Colonic mucosa (tissue), 4 donors: ENCODE measurements at regions of chr9 and their contacts with region 1.

Region 1: GRCh38 chr9:129139993-129140396 is 28.8 kb downstream of the PTPA start:
- DNase-seq: peak; percentile 92
- H3K4me3 ChIP-seq: peak overlapping the region; percentile 29
- H3K27ac ChIP-seq: peak overlapping the region; percentile 98
- H3K4me1 ChIP-seq: peaks cover 25% of the 10 kb centered on the region
- H3K27me3 ChIP-seq: no peaks in the 10 kb centered on the region
- CTCF ChIP-seq: no peak

Region 2: DNA sequence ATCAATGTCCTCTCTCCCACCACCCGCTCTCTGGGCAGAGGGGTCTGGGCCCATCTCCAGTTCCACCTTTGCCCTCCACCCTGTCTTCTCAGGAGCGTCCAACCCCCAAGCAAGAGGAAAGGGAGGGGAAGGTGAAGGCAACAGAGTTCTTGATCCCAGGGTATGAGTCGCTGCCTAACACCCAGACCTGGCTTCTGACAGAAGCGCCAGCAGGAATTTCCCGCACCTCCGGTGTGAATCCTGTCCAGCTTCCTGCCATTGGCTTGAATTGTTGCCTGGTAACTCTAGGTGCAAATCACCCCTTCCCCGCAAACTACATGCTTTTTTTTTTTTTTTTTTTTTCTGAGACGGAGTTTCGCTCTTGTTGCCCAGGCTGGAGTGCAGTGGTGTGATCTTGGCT is 122.3 kb after region 1 on chr9:
- intact Hi-C with region 1: no loop called
- DNase-seq: no peak
- H3K4me3 ChIP-seq: no peak overlapping the region
- H3K27ac ChIP-seq: no peak overlapping the region
- H3K4me1 ChIP-seq: no peaks in the 10 kb centered on the region
- H3K27me3 ChIP-seq: peaks cover 6% of the 10 kb centered on the region
- CTCF ChIP-seq: no peak

Region 3: DNA sequence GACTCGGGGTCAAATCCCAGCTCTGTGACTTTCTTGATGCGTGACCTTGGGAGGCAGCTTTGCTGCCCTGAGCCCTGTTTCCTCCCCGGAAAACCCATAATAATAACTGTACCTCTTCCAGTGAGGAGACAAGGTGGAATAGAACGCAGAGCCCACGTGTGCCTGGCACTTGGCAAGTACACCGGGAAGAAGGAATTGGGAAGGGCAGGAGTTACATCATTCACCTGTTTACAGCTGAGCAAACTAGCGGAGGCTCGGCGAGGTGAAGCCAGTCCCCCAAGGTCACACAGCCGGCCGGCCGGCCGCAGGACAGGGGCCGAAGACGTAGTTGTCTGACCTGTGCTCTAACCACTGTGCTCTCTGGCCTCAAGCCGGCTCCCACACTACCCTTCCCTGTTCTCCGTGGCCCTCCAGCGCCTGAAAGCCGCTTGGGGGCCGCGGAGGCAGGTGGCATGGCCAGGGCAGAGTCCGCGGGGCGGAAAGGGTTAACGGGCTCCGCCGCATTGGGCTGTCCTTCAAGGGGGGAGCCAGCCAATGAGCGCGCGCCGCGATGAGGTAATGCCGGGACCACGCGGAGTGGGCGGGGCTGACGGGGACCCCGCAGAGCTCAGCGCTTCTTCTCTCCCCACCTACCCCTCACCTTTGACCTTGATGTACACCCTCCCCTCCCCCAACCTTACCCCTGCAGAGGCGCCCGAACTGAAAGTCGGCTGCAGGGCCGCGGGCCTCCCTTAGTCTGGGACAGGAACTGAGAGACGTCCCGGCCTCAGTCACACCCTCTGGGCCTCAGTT is 355.7 kb after region 1 on chr9:
- intact Hi-C with region 1: loop called (anchors 10 kb)
- DNase-seq: peak; percentile 96
- H3K4me3 ChIP-seq: peak overlapping the region; percentile 53
- H3K27ac ChIP-seq: peak overlapping the region; percentile 93
- H3K4me1 ChIP-seq: peaks cover 4% of the 10 kb centered on the region
- H3K27me3 ChIP-seq: no peaks in the 10 kb centered on the region
- CTCF ChIP-seq: no peak

Region 4: DNA sequence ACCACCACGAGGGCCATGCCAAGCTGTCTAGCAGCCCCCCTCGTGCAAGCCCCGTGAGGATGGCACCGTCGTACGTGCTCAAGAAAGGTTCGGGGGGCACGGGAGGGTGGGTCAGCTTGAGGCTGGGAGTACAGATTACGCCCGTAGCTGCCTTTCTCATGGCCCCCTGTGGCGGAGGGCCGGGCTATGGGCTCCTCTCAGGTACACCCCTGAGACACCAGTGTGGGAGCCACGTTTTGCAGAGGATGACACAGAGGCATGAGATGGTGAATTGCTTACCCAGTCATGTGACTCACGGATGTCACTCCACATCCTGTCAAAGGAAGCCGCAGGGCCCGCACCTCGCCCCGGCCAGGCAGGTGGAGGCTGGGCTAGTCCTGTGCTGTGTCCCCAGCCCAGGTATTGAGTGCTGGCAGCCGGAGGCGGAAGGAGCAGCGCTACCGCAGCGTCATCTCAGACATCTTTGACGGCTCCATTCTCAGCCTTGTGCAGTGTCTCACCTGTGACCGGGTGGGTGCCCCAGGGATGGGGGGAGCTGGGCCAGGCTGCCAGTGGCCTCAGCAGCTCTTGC is 729.0 kb after region 1 on chr9:
- intact Hi-C with region 1: no loop called
- DNase-seq: peak; percentile 41
- H3K4me3 ChIP-seq: no peak overlapping the region
- H3K27ac ChIP-seq: no peak overlapping the region
- H3K4me1 ChIP-seq: no peaks in the 10 kb centered on the region
- H3K27me3 ChIP-seq: no peaks in the 10 kb centered on the region
- CTCF ChIP-seq: no peak